Heart left ventricle (tissue), 16 donors: ENCODE measurements at regions of chr3 and their contacts with region 1.

Region 1: DNA sequence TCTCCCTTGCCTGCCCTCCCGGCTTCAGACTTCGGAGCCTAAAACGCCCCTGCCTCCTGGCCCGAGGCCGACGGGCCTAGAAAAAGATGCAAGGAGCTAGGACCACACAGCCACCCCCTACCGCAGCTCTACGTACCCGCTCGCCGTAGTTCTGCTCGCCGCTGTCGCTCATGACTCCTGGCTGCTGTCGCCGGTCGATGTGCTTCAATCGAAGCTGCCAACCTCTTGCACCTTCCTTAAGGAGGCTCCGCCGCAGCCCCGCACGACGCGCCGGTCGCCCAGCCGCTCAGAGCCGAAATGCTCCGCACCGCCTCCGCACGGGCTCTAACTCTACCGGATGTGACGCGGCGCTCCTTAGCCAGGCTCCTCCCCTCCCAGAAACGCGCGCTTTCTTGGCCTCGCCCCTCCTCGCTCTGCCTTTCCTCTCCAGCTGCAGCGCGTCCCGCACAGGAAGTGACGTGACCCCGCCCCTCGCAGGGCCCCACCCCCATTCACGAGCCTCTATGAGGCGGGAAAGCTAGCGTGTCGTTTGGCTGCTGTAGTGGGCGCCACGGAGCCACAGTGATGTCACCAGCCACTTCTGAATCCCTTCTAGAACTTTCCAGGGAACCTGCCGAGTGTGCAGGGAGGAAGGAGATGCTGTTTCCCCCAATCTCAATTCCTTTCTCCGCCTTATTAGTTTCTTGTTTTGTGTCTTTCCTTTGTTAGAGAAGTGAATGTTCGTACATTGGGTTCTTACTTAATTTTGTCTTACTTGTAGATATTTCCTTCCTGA is at the start of gene TRA2B:
- DNase-seq: peak; percentile 99
- ATAC-seq: peak; percentile 97 to 99 (median 98)
- H3K4me3 ChIP-seq: peak within 1 kb of the TSS; percentile 68 to 100 (median 96)
- H3K27ac ChIP-seq: peak within 1 kb of the TSS; percentile 96 to 100 (median 100)
- H3K4me1 ChIP-seq: peaks cover 2 to 36% (median 25%) of the 10 kb centered on the region in 12 donors
- H3K27me3 ChIP-seq: no peaks in the 10 kb centered on the region
- CTCF ChIP-seq: peak in 8 of 12 donors; percentile 18 to 70 (median 32)
- POLR2A ChIP-seq: peak; percentile 99
- total RNA-seq, gene TRA2B: 40.4 to 66.0 (median 46.1) TPM

Region 2: DNA sequence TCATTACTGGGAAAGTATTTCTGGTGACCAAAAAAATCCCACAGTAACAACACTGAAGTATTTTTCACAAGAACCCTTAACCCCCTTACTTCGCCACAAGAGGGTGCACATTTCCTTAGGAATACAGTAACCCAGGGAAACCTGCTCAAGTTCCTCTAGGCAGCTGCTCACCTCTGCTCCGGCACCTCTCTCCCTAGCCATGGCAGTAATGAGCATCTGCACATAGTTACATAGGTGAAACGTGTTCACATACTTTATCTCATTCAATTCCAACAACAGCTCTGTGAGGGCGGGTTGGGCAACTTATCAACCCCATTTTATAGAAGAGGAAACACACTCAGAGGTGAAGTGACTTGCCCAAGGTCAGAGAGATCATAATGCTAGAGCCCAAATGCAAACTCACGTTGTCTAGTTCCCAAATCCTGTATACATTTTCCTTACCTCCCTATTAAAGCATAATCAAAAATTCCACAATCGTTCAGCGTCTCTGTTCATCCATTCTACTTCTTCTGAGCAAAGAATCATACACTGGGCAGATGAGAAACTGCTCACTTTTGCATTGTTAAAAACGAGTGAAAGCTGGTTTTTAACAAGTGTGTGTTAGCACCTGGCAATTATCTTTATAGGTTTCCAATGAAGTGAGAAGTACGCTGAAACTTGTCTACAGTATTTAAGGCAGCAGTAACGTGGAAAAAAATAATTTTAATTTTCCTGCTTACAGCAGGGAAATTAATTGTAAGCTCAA is 203.7 kb before region 1 on chr3:
- intact Hi-C with region 1: loop called in 2 of 10 experiments (anchors 10 kb)
- DNase-seq: peak in 3 of 5 donors; percentile 15 to 39 (median 32)
- ATAC-seq: peak in 3 of 4 donors; percentile 66 to 76 (median 72)
- H3K4me3 ChIP-seq: no peak overlapping the region
- H3K27ac ChIP-seq: no peak overlapping the region
- H3K4me1 ChIP-seq: peaks cover 0 to 7% (median 0%) of the 10 kb centered on the region in 12 donors
- H3K27me3 ChIP-seq: no peaks in the 10 kb centered on the region
- CTCF ChIP-seq: peak in 11 of 12 donors; percentile 27 to 55 (median 48)
- POLR2A ChIP-seq: no peak

Region 3: DNA sequence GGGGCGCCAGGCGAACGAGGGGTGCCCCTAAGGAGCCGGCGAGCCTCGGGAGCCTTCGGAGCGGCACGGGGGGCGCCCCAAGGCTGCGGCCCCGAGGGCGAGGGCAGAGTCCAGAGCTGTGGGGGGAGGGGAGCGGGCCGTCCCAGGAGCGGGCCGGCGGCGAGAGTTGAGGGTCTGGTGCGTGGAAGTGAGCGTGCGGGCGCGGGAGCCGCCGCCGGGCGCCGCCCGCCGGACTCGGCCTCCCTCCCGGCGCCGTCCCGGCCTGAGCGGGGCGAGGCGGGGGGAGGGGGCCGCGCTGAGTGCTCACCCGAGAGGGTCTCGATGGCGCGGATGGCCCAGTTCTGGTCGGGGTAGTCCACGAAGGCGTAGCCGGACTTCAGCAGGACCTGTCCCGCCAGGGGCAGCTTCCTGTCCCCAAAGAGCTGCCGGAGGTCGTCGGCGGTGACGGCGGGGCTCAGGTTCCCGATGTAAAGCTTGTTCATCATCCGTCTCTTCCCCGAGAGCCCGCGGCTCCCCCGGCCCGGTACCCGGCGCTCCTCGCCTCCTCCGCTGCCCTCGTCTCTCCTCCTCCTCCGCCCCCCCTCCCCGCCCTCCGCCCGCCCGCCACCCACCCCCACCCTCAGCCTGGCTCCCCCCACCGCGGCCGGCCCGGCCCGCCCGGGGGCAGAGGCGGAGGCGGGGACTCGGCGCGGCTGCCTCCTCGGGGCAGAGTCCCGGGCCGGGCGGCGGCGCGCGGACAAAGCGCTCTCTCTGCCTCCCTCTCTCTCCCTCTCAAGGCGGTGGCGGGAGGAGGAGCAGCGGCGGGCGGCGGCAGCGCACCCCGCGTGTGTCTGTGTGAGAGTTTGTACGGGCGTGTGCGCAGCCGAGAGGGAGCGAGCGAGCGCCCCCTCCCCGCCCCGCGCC is 113.1 kb before region 1 on chr3 and contains the start of gene IGF2BP2:
- intact Hi-C with region 1: loop called in 2 of 10 experiments (anchors 5 kb)
- DNase-seq: peak; percentile 60 to 81 (median 67)
- ATAC-seq: peak; percentile 31 to 85 (median 70)
- H3K4me3 ChIP-seq: peak within 1 kb of the TSS; percentile 66 to 84 (median 74)
- H3K27ac ChIP-seq: peak within 1 kb of the TSS in 11 of 12 donors; percentile 49 to 83 (median 68)
- H3K4me1 ChIP-seq: peaks cover 0 to 39% (median 7%) of the 10 kb centered on the region in 12 donors
- H3K27me3 ChIP-seq: peaks cover 0 to 52% (median 9%) of the 10 kb centered on the region in 9 donors
- CTCF ChIP-seq: peak in 2 of 12 donors; percentile 3 to 17
- POLR2A ChIP-seq: peak in 1 of 2 donors; percentile 53
- total RNA-seq, gene IGF2BP2: 11.2 to 21.8 (median 16.8) TPM

Region 4: DNA sequence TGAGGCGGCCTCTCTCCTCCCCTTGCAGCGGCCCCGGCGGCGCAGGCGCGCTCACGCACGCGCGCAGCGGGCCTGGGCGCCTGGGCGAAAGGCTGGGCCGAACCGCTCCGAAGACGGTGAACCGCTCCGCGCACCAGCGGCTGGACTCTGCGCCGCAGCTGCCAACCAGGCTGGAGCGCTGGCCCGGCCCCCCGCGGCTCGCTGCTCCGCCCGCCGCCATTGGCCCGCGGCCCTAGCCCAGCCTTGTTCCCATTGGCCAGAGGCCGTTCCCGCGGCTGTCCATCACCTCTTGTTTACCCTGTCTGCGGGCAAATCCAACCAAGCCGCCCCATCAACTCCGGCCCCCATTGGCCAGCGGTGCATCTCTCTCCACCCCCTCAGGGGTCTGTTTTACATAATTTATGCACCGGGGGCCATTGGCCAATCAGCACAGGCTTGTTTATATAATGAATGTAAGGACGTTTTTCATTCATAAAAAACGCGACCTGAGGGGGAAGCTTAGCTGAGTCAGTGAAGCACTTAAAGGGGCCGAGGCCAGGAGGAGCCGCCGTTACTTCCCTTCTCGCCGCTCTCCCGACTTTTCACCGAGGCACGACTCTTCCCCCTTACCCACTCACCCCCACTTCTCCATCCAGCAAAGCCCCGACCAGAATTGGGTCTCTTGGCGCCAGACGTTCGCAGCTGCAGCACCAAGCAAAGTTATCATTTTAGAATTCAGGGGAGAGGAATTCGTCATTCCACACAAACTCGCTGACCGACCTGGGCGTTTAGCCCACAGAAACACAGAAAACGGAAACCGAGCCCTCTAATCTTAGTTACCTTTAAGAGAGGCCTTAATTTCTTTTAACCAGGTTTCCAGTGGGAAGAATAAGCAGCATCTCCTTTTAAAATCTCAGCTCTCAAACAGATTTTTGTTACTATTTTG is 171.3 kb after region 1 on chr3 and contains the start of gene ETV5:
- intact Hi-C with region 1: loop called in 2 of 10 experiments (anchors 5 kb)
- DNase-seq: peak; percentile 99 to 100 (median 100)
- ATAC-seq: peak; percentile 98 to 99 (median 99)
- H3K4me3 ChIP-seq: peak within 1 kb of the TSS; percentile 38 to 95 (median 88)
- H3K27ac ChIP-seq: peak within 1 kb of the TSS; percentile 51 to 91 (median 82)
- H3K4me1 ChIP-seq: peaks cover 0 to 35% (median 13%) of the 10 kb centered on the region in 12 donors
- H3K27me3 ChIP-seq: peaks cover 0 to 22% (median 0%) of the 10 kb centered on the region in 9 donors
- CTCF ChIP-seq: peak in 1 of 12 donors; percentile 23
- POLR2A ChIP-seq: peak; percentile 13 to 82
- total RNA-seq, gene ETV5: 4.2 to 29.9 (median 6.9) TPM

Region 5: DNA sequence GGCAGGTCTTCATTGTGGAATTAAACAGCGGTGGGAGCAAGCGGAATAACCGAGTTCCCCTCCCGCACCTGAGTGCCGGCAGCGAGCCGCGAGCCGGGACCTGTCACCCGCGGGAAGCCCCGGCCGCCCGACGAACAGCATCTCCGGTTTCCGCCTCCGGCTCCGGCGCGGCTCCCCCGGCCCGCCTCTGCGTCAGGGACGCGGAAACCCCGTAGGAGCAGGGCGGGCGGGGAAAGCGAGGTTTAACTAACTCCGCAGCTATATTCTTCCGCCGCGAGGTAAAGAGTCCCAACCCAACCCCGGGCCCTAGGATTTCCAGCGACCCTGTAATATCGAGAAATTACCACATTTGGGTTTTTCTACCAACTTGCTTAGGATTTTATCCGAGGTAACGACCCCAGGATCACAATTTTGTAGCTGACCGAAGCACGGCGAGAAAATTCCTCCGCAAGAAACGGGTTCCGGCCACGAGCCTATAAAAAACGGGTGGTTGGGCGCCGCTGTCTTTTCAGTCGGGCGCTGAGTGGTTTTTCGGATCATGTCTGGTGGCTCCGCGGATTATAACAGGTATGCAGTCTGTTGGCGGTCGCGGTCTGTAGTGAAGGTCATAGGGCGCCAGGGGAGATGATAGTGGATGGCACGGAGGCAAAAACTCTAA is 845.3 kb after region 1 on chr3 and contains the start of gene EIF4A2:
- intact Hi-C with region 1: loop called in 2 of 10 experiments (anchors 5 to 10 kb)
- DNase-seq: peak; percentile 92 to 95 (median 93)
- ATAC-seq: peak; percentile 84 to 91 (median 87)
- H3K4me3 ChIP-seq: peak within 1 kb of the TSS; percentile 71 to 97 (median 84)
- H3K27ac ChIP-seq: peak within 1 kb of the TSS; percentile 95 to 100 (median 99)
- H3K4me1 ChIP-seq: peaks cover 7 to 45% (median 35%) of the 10 kb centered on the region in 12 donors
- H3K27me3 ChIP-seq: no peaks in the 10 kb centered on the region
- CTCF ChIP-seq: peak in 1 of 12 donors; percentile 10
- POLR2A ChIP-seq: peak in 1 of 2 donors; percentile 75
- total RNA-seq, gene EIF4A2: 291 to 496 (median 375) TPM